ENCODE measurements at regions of chr17 and their contacts with region 1.

Region 1: GRCh38 chr17:57849874-57850754 is at the start of gene MRPS23:
- DNase-seq: peak; percentile 94 to 99 (median 97)
- H3K4me3 ChIP-seq: peak within 1 kb of the TSS; percentile 75 to 87
- H3K4me3 Mint-ChIP-seq: peak within 1 kb of the TSS; percentile 96 to 99 (median 98)
- H3K27ac ChIP-seq: peak within 1 kb of the TSS; percentile 92
- H3K27ac Mint-ChIP-seq: peak within 1 kb of the TSS; percentile 98 to 100 (median 99)
- H3K4me1 ChIP-seq: peaks cover 32% of the 10 kb centered on the region
- H3K4me1 Mint-ChIP-seq: peaks cover 27 to 57% (median 35%) of the 10 kb centered on the region in 4 donors
- H3K27me3 ChIP-seq: no peaks in the 10 kb centered on the region
- H3K27me3 Mint-ChIP-seq: no peaks in the 10 kb centered on the region
- total RNA-seq, gene MRPS23: 28.7 to 29.5 TPM

Region 2: DNA sequence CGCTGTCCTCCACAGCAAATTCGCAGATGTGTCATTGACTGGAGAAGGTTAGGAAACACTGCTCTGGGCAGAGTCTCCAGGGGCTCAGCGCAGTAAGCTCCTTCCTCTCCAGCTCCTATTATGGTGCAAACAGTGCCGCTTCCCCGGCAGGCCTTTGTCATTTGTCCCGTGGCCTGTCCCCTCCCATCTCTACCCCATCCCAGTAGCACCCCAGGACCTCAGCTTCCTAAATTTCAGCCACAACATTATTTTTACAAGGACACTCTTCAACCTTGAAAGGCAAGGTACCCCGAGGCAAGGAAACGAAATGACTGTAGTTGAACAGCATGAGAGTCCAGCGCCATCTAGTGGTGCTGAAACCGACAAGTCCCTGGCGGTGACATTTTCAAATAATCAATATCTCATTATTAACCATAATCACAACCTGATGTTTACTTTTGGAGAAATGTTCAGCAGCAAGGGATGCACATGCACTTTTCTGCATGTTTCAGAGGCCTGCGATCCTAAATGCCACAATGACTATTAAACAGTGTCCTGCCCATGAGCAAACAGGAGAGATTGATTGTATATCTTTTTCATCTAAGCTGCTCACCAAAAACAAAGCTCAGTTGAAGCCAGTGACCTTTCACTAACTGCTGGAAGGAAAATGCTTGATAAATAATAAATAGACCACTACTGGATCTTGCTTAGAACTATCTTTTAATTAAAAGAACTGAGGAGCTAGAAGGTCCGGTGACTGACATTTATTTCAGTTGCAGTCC is 16.8 kb before region 1 on chr17:
- CTCF ChIA-PET with region 1: interaction called, 31 read pairs
- POLR2A ChIA-PET with region 1: interaction called, 5 read pairs
- intact Hi-C with region 1: no loop called
- DNase-seq: peak; percentile 58 to 65 (median 61)
- H3K4me3 ChIP-seq: no peak overlapping the region
- H3K4me3 Mint-ChIP-seq: no peak overlapping the region
- H3K27ac ChIP-seq: no peak overlapping the region
- H3K27ac Mint-ChIP-seq: no peak overlapping the region
- H3K4me1 ChIP-seq: peaks cover 10% of the 10 kb centered on the region
- H3K4me1 Mint-ChIP-seq: peaks cover 0 to 5% (median 0%) of the 10 kb centered on the region in 4 donors
- H3K27me3 ChIP-seq: no peaks in the 10 kb centered on the region
- H3K27me3 Mint-ChIP-seq: no peaks in the 10 kb centered on the region

Region 3: DNA sequence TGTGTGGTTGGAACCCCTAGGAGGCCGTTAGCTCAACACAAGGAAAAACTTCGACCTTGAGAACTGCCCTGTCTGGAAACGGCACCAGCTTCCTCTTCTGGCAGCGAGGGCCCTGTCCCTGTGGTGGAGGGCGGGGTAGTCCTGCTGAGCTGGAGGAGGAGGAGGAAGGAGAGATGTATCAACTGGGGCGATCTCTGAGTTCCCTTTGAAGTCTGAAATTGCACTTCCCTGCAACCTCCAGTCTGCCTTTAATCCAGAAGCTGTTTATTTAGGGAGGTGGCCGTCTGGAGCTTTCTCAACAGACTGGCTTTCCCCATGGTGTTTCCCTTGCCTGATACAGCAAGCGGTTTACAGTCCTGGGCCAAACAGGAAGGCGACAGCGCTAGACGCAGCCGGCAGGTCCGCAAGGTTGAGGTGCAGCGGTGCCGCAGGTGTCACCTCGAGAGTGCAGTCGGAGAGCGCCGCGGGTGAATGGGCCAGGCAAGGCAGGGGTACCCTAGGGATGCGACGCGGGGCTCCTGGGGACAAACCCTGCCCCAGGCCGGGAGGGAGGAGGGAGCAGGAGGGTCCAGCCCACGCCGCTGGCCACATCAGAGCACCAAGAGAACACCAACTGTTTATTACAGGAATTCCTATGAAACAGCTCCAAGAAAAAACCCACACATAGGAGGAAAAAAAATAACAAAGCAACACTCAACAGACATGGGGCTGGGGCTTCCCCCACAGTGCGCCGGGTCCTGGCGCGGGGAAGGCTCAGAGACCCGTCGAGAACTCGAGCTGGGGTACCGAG is 11.1 kb after region 1 on chr17:
- CTCF ChIA-PET with region 1: interaction called, 30 read pairs
- POLR2A ChIA-PET with region 1: interaction called, 64 read pairs
- intact Hi-C with region 1: no loop called
- DNase-seq: peak; percentile 25 to 61 (median 32)
- H3K4me3 ChIP-seq: peak overlapping the region; percentile 52 to 66
- H3K4me3 Mint-ChIP-seq: peak overlapping the region; percentile 82 to 96 (median 86)
- H3K27ac ChIP-seq: no peak overlapping the region
- H3K27ac Mint-ChIP-seq: peak overlapping the region; percentile 13 to 75 (median 71)
- H3K4me1 ChIP-seq: peaks cover 13% of the 10 kb centered on the region
- H3K4me1 Mint-ChIP-seq: peaks cover 9 to 20% (median 14%) of the 10 kb centered on the region in 4 donors
- H3K27me3 ChIP-seq: no peaks in the 10 kb centered on the region
- H3K27me3 Mint-ChIP-seq: peaks cover 4 to 8% of the 10 kb centered on the region in 2 donors

Region 4: GRCh38 chr17:57874434-57875308 is 24.6 kb after region 1 on chr17:
- CTCF ChIA-PET with region 1: no interaction called
- POLR2A ChIA-PET with region 1: no interaction called
- intact Hi-C with region 1: no loop called
- DNase-seq: no peak
- H3K4me3 ChIP-seq: no peak overlapping the region
- H3K4me3 Mint-ChIP-seq: peak overlapping the region in 4 of 8 donors; percentile 34 to 75 (median 64)
- H3K27ac ChIP-seq: no peak overlapping the region
- H3K27ac Mint-ChIP-seq: peak overlapping the region in 1 of 7 donors; percentile 53
- H3K4me1 ChIP-seq: peaks cover 14% of the 10 kb centered on the region
- H3K4me1 Mint-ChIP-seq: peaks cover 2 to 20% (median 12%) of the 10 kb centered on the region in 4 donors
- H3K27me3 ChIP-seq: peaks cover 3% of the 10 kb centered on the region
- H3K27me3 Mint-ChIP-seq: peaks cover 7 to 19% of the 10 kb centered on the region in 2 donors

Region 5: DNA sequence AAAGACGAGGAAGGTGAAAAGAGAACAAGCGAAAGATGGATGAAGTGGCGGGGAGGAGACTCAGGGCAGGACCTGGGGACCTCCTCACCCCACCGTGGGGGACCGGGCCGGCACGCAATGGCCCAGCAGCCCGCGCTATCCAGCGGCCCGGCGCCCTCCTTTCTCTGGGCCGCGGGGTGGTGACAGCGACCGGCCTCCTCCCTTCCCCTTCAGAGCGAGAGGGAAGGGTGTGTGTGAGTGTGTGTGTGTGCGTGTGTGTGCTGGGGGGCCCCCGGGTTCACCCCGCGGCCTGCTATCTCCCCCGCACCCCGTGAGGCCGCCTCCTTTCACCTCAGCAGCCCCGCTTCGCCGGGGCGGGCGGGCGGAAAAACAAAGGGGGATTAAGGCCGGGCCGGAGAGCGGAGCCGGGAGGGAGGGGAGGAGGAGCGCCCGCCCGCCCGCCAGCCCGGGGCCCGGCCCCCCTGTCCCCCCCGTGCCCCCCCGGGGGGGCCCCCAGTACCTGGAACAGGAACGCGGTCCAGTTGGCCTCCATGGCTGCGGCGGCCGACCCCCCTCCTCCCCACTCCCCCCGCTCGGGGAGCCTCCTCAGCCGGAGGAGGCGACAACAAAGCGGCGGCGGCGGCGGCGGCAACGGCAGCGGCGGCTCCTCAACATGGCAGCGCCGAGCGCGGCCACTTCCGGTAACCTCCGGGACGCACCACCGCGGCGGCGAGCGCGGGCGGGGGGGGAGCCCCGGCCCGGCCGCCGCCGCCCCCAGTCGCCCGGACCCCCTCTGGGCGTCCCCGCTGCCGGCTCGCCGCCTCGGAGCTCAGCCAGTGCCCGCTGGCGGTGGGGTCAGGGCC is 137.7 kb after region 1 on chr17 and contains the start of gene VEZF1:
- CTCF ChIA-PET with region 1: interaction called, 202 read pairs
- POLR2A ChIA-PET with region 1: interaction called, 11 read pairs
- intact Hi-C with region 1: loop called (anchors 1 kb)
- DNase-seq: peak; percentile 75 to 84 (median 80)
- H3K4me3 ChIP-seq: peak within 1 kb of the TSS; percentile 62 to 89
- H3K4me3 Mint-ChIP-seq: peak within 1 kb of the TSS; percentile 94 to 97 (median 96)
- H3K27ac ChIP-seq: peak within 1 kb of the TSS; percentile 76
- H3K27ac Mint-ChIP-seq: peak within 1 kb of the TSS; percentile 94 to 98 (median 97)
- H3K4me1 ChIP-seq: peaks cover 55% of the 10 kb centered on the region
- H3K4me1 Mint-ChIP-seq: peaks cover 46 to 69% (median 61%) of the 10 kb centered on the region in 4 donors
- H3K27me3 ChIP-seq: no peaks in the 10 kb centered on the region
- H3K27me3 Mint-ChIP-seq: no peaks in the 10 kb centered on the region
- total RNA-seq, gene VEZF1: 76.0 to 76.6 TPM

Region 6: DNA sequence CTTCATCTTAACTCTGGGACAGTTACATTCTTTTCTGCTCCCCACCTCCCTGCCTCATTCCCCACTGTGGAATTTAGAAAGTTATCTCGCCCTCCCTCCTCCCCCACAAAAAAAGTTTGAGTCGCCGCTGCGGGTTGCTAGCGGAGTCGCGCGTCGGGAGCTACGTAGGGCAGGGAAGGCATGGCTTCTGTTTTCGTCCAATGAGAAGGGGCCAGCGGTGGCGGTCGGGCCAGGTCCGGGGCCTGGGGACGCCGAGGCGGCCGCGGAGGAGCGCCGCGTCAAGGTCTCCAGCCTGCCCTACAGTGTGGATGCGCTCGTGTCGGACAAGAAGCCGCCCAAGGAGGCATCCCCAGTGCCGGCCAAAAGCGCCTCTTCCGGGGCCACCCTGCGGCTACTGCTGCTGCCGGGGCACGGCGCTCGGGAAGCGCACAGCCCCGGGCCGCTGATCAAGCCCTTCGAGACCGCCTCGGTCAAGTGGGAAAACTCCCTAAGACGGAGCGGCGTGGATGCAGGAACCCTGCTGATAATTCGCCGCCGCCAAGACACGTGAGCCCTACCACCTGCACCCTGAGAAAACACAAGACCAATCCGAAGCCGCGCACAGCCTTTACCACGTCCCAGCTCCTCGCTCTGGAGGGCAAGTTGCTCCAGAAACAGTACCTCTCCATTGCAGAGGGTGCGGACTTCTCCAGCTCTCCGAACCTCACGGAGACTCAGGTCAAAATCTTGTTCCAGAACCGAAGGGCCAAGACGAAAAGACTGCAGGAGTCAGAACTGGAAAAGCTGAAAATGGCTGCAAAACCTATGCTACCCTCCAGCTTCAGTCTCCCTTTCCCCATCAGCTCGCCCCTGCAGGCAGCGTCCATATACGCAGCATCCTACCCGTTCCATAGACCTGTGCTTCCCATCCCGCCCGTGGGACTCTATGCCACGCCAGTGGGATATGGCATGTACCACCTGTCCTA is 307.0 kb after region 1 on chr17:
- CTCF ChIA-PET with region 1: interaction called, 3 read pairs
- POLR2A ChIA-PET with region 1: interaction called, 6 read pairs
- intact Hi-C with region 1: loop called (anchors 1 kb)
- DNase-seq: peak; percentile 54 to 67 (median 58)
- H3K4me3 ChIP-seq: peak overlapping the region; percentile 55 to 63
- H3K4me3 Mint-ChIP-seq: peak overlapping the region; percentile 87 to 98 (median 92)
- H3K27ac ChIP-seq: peak overlapping the region; percentile 68
- H3K27ac Mint-ChIP-seq: peak overlapping the region; percentile 90 to 99 (median 97)
- H3K4me1 ChIP-seq: peaks cover 63% of the 10 kb centered on the region
- H3K4me1 Mint-ChIP-seq: peaks cover 49 to 82% (median 68%) of the 10 kb centered on the region in 4 donors
- H3K27me3 ChIP-seq: no peaks in the 10 kb centered on the region
- H3K27me3 Mint-ChIP-seq: no peaks in the 10 kb centered on the region

Region 7: GRCh38 chr17:59106463-59107305 is 1256.6 kb after region 1 on chr17 and contains the start of gene TRIM37:
- CTCF ChIA-PET with region 1: no interaction called
- POLR2A ChIA-PET with region 1: no interaction called
- intact Hi-C with region 1: loop called (anchors 5 kb)
- DNase-seq: peak; percentile 99 to 100 (median 99)
- H3K4me3 ChIP-seq: peak within 1 kb of the TSS; percentile 67 to 71
- H3K4me3 Mint-ChIP-seq: peak within 1 kb of the TSS; percentile 90 to 96 (median 92)
- H3K27ac ChIP-seq: peak within 1 kb of the TSS; percentile 81
- H3K27ac Mint-ChIP-seq: peak within 1 kb of the TSS; percentile 90 to 97 (median 95)
- H3K4me1 ChIP-seq: peaks cover 29% of the 10 kb centered on the region
- H3K4me1 Mint-ChIP-seq: peaks cover 25 to 47% (median 37%) of the 10 kb centered on the region in 4 donors
- H3K27me3 ChIP-seq: no peaks in the 10 kb centered on the region
- H3K27me3 Mint-ChIP-seq: no peaks in the 10 kb centered on the region
- total RNA-seq, gene TRIM37: 20.7 to 25.0 TPM